ENCODE measurements at regions of chr1 and their contacts with region 1.

Region 1: DNA sequence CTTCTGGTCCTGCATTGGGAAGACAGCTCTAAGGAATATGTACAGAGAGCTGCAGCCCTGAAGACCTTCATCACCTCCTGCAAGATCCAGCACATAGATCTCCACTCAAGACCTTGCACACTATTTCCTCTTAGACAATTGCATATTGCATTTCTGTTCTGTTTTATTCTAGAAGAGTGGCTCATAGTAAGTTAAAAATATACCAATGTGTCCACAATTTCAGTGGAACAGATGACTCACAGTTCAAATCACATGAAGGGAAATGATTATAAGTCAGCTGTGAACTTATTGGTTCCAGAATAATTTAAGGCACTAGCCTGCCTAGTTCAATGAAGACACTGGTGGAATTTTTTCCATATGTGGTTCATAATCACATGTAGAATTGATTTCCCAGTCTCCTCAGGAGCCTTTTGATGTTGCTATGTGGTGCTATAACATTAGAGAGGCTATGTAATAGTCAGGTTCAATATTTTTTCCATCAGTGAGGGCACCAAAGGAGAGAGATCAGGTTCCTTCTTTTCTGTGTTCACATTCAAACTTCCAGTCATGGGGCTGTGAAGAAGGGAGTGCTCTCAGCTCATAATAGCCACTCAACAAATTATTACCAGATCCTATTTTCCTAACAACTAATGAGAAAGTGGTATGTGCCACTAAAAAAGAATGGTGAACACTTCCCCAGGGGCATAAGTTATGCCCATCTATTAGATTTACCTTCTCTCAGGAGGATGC is 9.8 kb upstream of the AK5 start:
- DNase-seq: peak; percentile 12
- ATAC-seq: no peak
- H3K4me3 ChIP-seq: no peak overlapping the region
- H3K27ac ChIP-seq: no peak overlapping the region
- H3K4me1 ChIP-seq: no peaks in the 10 kb centered on the region
- H3K27me3 ChIP-seq: peaks cover 2% of the 10 kb centered on the region; the same call in 1 of the 2 replicates
- CTCF ChIP-seq: no peak

Region 2: GRCh38 chr1:77313491-77313890 is 41.5 kb after region 1 on chr1:
- CTCF ChIA-PET with region 1: no interaction called
- POLR2A ChIA-PET with region 1: interaction called, 15 read pairs
- in situ Hi-C with region 1: no loop called
- intact Hi-C with region 1: no loop called
- DNase-seq: no peak
- ATAC-seq: peak; percentile 96
- H3K4me3 ChIP-seq: no peak overlapping the region
- H3K27ac ChIP-seq: no peak overlapping the region
- H3K4me1 ChIP-seq: no peaks in the 10 kb centered on the region
- H3K27me3 ChIP-seq: no peaks in the 10 kb centered on the region
- CTCF ChIP-seq: peak; percentile 73

Region 3: DNA sequence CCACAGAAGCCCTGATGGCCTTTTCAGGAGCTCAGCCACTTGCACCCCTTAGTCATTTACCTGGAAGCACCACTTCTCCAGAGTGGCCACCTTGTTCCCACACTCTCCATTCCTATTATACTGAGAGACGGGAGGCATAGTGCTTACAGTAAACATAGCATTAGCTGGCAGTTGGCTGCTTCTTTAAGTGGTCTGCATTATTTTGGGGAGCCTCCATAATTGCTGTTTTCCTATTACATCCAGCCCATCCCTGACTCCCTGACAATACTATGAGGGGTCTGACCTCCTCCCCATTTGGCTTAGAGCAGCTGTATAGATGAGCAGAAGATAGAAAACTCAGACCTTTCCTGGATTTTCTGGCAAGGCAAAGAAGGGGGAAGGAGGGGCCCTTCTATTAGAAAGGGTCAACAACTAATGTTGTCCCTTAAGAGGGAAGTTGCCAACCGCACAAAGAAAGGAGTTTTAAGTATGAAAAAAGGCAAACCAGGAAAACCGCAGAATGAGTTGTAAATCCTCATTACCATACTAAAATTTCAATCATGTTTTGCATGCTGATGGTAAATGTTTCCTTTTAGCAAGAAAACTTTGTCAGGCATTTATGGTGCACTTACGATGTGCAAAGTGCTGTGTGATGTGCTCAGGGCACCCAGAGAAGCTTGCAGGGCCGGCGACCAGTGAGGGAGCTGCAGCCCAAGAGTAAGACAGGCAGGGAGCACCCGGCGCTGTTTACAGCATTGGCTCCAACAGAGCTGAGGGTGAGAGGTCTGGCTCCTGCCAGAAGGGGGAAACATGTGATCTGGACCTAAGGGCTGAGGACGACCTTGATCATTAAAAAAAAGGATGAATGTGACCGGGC is 243.1 kb after region 1 on chr1:
- CTCF ChIA-PET with region 1: no interaction called
- POLR2A ChIA-PET with region 1: no interaction called
- in situ Hi-C with region 1: no loop called
- intact Hi-C with region 1: no loop called
- DNase-seq: no peak
- ATAC-seq: peak; percentile 93
- H3K4me3 ChIP-seq: no peak overlapping the region
- H3K27ac ChIP-seq: peak overlapping the region; percentile 65
- H3K4me1 ChIP-seq: peaks cover 14% of the 10 kb centered on the region; the same call in 1 of the 2 replicates
- H3K27me3 ChIP-seq: no peaks in the 10 kb centered on the region
- CTCF ChIP-seq: 0 out of 2 replicates have a peak, but pooled peaks have one; percentile 29